B cell (primary cell): ENCODE measurements at regions of chr13 and their contacts with region 1.

Region 1: DNA sequence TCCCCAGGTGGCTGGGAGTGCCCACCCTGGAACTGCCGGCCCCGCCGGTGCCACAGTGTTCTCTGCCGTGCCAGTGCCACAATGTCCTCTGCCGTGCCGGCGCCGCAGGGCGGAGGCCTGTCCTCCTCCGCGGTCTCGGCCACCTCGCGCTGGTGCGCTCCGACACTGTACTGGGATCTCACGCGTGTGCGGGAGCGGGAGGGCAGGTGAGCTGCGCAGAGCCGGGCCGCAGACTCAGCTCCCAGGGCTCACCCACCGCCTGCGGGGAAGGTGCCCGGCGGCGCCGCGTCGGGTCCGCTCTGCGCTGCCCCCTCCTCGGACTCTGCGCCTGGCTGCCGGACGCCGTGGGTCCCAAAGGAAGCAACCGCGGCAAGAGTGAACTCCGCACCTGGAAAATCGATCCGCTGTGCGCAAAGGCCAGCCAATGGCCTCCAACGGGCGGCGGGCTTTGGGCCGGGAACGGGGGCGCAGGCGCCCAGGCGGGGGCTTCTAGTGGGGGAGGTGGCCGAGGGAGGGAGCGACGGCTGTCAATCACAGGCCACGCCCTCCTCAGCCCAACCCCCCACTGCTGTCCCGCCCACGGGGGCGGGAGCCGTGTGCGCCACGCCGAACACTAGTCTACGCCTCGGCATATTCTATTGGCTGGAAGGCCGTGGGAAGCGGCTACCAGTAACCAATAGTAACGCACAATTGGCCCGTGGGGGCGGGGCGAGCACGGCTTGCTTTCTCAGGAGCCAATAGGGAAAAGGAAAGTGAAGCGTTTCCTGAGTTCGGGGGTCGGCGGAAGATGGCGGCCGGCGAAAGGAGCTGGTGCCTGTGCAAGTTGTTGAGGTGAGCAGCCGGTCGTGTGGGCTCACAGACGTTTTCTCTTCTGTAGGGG is at the start of gene ALG11:
- DNase-seq: peak; percentile 99
- ATAC-seq: peak; percentile 99
- H3K4me3 ChIP-seq: peak within 1 kb of the TSS; percentile 95 to 100 (median 96)
- H3K4me3 Mint-ChIP-seq: peak within 1 kb of the TSS; percentile 99
- H3K27ac ChIP-seq: peak within 1 kb of the TSS; percentile 13 to 77
- H3K27ac Mint-ChIP-seq: peak within 1 kb of the TSS; percentile 90
- H3K4me1 ChIP-seq: peaks cover 12 to 20% of the 10 kb centered on the region in 2 donors
- H3K4me1 Mint-ChIP-seq: peaks cover 19% of the 10 kb centered on the region
- H3K27me3 ChIP-seq: peaks cover 0 to 22% (median 13%) of the 10 kb centered on the region in 4 experiments
- H3K27me3 Mint-ChIP-seq: peaks cover 24% of the 10 kb centered on the region
- CTCF ChIP-seq: no peak
- total RNA-seq, gene ALG11: 38.8 and 40.8 TPM in 2 replicates

Region 2: DNA sequence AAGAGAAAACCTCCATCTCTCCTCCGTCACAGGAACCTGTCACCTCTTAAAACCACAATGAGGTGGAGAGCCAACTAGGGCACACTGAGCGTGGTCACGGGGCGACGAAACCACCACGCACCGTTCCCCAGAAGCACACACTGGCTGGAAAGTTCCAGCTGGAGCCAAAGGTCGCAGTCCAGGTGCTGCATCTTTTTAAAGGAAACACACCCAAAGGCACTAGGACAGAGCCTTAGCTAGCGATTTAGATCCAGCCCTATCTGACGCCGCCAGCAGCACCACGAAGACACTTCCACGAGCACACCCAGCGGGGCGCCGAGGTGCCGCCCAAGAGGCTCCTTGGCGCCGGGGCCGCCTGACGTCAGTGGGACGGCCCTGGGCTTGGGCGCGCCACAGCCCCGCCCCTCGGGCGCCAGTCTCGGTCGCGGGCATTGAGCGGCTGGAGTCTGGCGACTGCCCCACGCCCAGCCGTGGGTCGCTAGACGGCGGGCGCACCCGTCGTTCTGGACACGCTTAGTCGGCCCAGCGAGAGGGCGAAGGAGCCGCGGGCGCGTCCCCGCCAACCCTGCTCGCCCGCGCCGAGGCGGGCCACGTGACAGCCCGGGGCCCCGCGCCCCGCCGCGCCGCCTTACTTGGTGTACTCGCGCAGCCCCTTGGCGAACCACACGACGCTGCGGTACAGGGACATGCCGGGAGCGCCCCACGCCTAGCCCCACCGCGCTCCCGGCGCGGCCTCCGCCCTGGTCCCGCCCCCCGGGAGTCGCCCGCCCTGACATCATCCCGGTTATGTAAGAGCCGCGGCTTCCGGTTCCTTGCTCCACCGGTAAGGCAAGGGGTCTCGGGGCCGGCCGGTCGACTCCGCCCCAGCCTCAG is 208.2 kb before region 1 on chr13 and contains the start of gene DHRS12:
- CTCF ChIA-PET with region 1: interaction called, 3 read pairs
- POLR2A ChIA-PET with region 1: no interaction called
- intact Hi-C with region 1: loop called (anchors 1 kb)
- DNase-seq: peak; percentile 95
- ATAC-seq: peak; percentile 84
- H3K4me3 ChIP-seq: peak within 1 kb of the TSS; percentile 64 to 94 (median 72)
- H3K4me3 Mint-ChIP-seq: peak within 1 kb of the TSS; percentile 99
- H3K27ac ChIP-seq: peak within 1 kb of the TSS; percentile 98
- H3K27ac Mint-ChIP-seq: peak within 1 kb of the TSS; percentile 100
- H3K4me1 ChIP-seq: peaks cover 19 to 27% of the 10 kb centered on the region in 2 donors
- H3K4me1 Mint-ChIP-seq: peaks cover 38% of the 10 kb centered on the region
- H3K27me3 ChIP-seq: no peaks in the 10 kb centered on the region
- H3K27me3 Mint-ChIP-seq: no peaks in the 10 kb centered on the region
- CTCF ChIP-seq: no peak
- total RNA-seq, gene DHRS12: 23.2 TPM in 2 replicates

Region 3: DNA sequence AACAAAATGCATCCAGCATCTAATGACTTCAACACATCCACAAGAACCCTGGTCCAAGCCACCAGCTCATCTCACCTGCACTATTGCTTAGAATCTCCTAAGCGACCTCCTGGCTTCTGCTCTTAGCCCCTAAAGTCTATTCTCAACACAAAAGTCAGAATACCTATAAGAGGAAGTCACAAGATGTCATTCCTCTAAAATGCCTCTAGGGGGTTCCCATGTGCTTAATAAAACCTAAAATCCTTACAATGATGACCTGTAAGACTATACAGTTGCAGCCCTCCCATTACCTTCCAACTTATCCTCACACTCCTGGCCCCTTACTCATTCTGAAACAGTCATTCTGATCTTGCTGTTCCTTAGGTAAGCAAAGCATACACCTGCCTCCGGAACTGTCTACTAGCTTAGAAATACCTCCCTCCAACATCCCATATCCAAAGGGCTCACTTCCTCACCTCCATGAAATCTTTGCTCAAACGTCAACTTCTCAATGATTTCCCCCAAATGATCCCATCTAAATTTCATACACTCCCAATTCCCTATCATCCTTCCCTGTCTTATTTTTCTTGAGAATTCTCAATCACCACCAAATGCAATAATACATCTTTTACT is 10.6 kb before region 1 on chr13:
- CTCF ChIA-PET with region 1: interaction called, 9 read pairs
- POLR2A ChIA-PET with region 1: no interaction called
- intact Hi-C with region 1: loop called (anchors 1 kb)
- DNase-seq: peak; percentile 55
- ATAC-seq: peak; percentile 85
- H3K4me3 ChIP-seq: no peak overlapping the region
- H3K4me3 Mint-ChIP-seq: no peak overlapping the region
- H3K27ac ChIP-seq: no peak overlapping the region
- H3K27ac Mint-ChIP-seq: no peak overlapping the region
- H3K4me1 ChIP-seq: no peaks in the 10 kb centered on the region
- H3K4me1 Mint-ChIP-seq: no peaks in the 10 kb centered on the region
- H3K27me3 ChIP-seq: peaks cover 0 to 16% (median 2%) of the 10 kb centered on the region in 4 experiments
- H3K27me3 Mint-ChIP-seq: peaks cover 34% of the 10 kb centered on the region
- CTCF ChIP-seq: peak; percentile 90

Region 4: DNA sequence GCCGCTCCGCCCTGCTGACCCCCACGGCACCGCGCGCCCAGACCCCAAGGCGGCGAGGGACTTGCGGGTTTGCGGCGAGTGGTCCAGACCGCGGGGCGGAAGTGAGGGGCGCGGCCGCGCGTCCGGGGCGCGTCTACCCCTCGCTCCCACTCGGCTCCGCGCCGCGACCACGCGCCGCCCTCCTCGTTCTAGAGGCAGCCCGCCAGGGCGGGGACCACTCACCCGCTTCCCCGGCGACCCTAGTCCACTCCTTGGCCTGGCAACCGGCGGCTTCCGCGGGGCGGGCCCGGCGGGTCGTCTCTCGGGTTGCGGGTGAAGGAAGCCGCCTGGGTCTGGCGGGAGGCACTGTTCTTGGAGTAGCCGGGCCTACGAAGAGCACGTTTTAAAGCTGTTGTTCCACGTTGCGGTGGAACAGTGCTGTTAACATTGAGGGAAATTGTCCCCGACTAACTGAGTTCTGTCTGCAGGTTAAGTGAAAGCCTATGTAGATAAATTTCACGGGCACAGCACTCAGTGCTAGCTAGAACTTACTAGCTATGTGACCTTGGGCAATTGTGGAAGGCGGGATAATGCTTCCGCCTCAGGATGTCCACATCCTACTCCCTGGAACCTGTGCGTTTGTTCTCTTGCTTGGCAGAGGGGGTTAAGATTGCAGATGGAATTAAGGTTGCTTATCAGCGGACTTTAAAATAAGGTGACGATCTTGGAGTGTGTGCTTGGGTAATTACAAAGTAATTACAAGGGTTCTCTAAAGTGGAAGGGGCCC is 147.6 kb after region 1 on chr13 and contains the start of gene NEK3:
- CTCF ChIA-PET with region 1: no interaction called
- POLR2A ChIA-PET with region 1: no interaction called
- intact Hi-C with region 1: loop called (anchors 1 kb)
- DNase-seq: peak; percentile 67
- ATAC-seq: peak; percentile 80
- H3K4me3 ChIP-seq: peak within 1 kb of the TSS; percentile 52 to 74 (median 72)
- H3K4me3 Mint-ChIP-seq: peak within 1 kb of the TSS; percentile 91
- H3K27ac ChIP-seq: peak within 1 kb of the TSS; percentile 13 to 50
- H3K27ac Mint-ChIP-seq: peak within 1 kb of the TSS; percentile 76
- H3K4me1 ChIP-seq: peaks cover 13% of the 10 kb centered on the region in 2 donors
- H3K4me1 Mint-ChIP-seq: peaks cover 20% of the 10 kb centered on the region
- H3K27me3 ChIP-seq: no peaks in the 10 kb centered on the region
- H3K27me3 Mint-ChIP-seq: no peaks in the 10 kb centered on the region
- CTCF ChIP-seq: no peak
- total RNA-seq, gene NEK3: 11.5 and 12.6 TPM in 2 replicates

Region 5: DNA sequence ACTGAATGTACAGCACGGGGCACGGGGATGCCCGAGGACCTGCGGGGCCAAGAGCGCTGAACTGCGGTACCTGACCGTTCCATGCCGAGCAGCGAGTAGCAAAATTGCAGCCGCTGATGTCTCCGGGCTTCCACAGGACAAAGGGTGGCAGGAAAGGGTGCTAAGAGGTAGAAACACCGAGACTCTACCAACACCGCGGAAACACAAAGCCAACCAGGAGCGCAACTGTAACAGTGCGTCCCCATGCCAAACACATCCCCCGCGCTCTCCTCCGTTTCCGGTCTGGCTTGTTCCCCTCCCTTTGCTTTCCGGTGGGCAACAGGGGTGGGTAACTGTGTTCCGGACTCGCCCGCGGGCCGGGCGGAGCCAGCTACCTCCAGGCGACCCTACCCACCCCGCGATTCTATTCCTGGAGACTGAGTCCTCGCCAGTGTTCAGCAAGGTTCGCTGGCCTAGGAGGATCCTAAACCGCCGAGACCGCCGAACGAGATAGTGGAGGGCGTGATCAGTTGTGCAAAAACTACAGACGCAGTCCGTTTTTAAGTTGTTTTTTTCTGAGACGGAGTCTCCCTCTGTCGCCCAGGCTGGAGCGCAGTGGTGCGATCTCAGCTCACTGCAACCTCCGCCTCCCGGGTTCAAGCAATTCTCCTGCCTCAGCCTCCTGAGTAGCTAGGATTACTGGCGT is 182.5 kb after region 1 on chr13:
- CTCF ChIA-PET with region 1: no interaction called
- POLR2A ChIA-PET with region 1: interaction called, 3 read pairs
- intact Hi-C with region 1: loop called (anchors 1 kb)
- DNase-seq: peak; percentile 91
- ATAC-seq: peak; percentile 84
- H3K4me3 ChIP-seq: peak overlapping the region; percentile 69 to 97 (median 95)
- H3K4me3 Mint-ChIP-seq: peak overlapping the region; percentile 99
- H3K27ac ChIP-seq: peak overlapping the region; percentile 57 to 75
- H3K27ac Mint-ChIP-seq: peak overlapping the region; percentile 98
- H3K4me1 ChIP-seq: peaks cover 8 to 16% of the 10 kb centered on the region in 2 donors
- H3K4me1 Mint-ChIP-seq: peaks cover 21% of the 10 kb centered on the region
- H3K27me3 ChIP-seq: no peaks in the 10 kb centered on the region
- H3K27me3 Mint-ChIP-seq: no peaks in the 10 kb centered on the region
- CTCF ChIP-seq: no peak

Region 6: GRCh38 chr13:52652196-52652979 is 640.5 kb after region 1 on chr13 and contains the start of gene SUGT1:
- CTCF ChIA-PET with region 1: no interaction called
- POLR2A ChIA-PET with region 1: no interaction called
- intact Hi-C with region 1: loop called (anchors 2 kb)
- DNase-seq: peak; percentile 97
- ATAC-seq: peak; percentile 93
- H3K4me3 ChIP-seq: peak within 1 kb of the TSS; percentile 63 to 97 (median 95)
- H3K4me3 Mint-ChIP-seq: no peak within 1 kb of the TSS
- H3K27ac ChIP-seq: peak within 1 kb of the TSS; percentile 93 to 98
- H3K27ac Mint-ChIP-seq: no peak within 1 kb of the TSS
- H3K4me1 ChIP-seq: peaks cover 8 to 25% of the 10 kb centered on the region in 2 donors
- H3K4me1 Mint-ChIP-seq: peaks cover 11% of the 10 kb centered on the region
- H3K27me3 ChIP-seq: no peaks in the 10 kb centered on the region
- H3K27me3 Mint-ChIP-seq: no peaks in the 10 kb centered on the region
- CTCF ChIP-seq: peak; percentile 75
- total RNA-seq, gene SUGT1: 38.2 and 38.4 TPM in 2 replicates